A549 (cell line): ENCODE measurements at regions of chr2 and their contacts with region 1.

Region 1: DNA sequence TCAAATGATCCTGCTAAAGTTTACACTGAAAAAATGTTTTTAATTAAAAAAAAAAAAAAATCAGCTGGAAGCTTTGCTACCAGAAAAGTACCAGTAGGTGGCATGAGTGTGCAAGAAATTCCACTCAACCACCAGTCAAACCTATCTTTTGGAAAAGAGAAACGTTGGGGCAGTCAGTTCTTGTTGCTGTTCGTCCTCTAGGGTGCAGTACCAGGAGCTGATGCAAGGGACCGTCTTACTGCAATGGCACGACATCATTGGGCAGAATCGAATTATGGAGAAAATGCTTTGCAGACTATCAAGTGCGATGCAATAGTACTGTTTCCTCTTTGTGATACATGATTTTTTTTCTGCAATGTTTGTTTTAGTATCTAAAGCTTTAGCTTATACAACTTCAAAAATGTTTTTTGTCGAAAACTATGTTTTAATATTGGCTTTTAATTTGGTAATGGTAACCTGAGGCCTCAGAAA is 18.3 kb downstream of the YPEL5 start:
- DNase-seq: peak; percentile 96
- ATAC-seq: peak; percentile 95 to 99
- H3K4me3 ChIP-seq: no peak overlapping the region
- H3K27ac ChIP-seq: no peak overlapping the region
- H3K4me1 ChIP-seq: no peaks in the 10 kb centered on the region
- CTCF ChIP-seq: peak; percentile 100
- EP300 ChIP-seq: no peak
- POLR2A ChIP-seq: no peak
- RAD21 ChIP-seq: peak; percentile 97 to 98

Region 2: GRCh38 chr2:30078521-30078920 is 86.6 kb before region 1 on chr2:
- CTCF ChIA-PET with region 1: no interaction called
- POLR2A ChIA-PET with region 1: no interaction called
- DNase-seq: no peak
- ATAC-seq: 0 out of 6 replicates have a peak, but pooled peaks of 1 of the 2 experiments have one; percentile 34
- H3K4me3 ChIP-seq: no peak overlapping the region
- H3K27ac ChIP-seq: no peak overlapping the region
- H3K4me1 ChIP-seq: no peaks in the 10 kb centered on the region
- CTCF ChIP-seq: no peak
- EP300 ChIP-seq: no peak
- POLR2A ChIP-seq: no peak
- RAD21 ChIP-seq: no peak

Region 3: GRCh38 chr2:30146438-30147147 is 18.5 kb before region 1 on chr2 and contains the start of gene YPEL5:
- CTCF ChIA-PET with region 1: interaction called, 149 read pairs
- POLR2A ChIA-PET with region 1: interaction called, 9 read pairs
- DNase-seq: peak; percentile 98 to 99
- ATAC-seq: peak; percentile 92 to 99
- H3K4me3 ChIP-seq: peak within 1 kb of the TSS; percentile 99
- H3K27ac ChIP-seq: peak within 1 kb of the TSS; percentile 95
- H3K4me1 ChIP-seq: peaks cover 36% of the 10 kb centered on the region
- CTCF ChIP-seq: no peak
- EP300 ChIP-seq: 0 out of 5 replicates have a peak, but pooled peaks of 1 of the 2 experiments have one; percentile 25
- POLR2A ChIP-seq: no peak; the same call in 1 of the 2 replicates
- RAD21 ChIP-seq: no peak
- polyA plus RNA-seq, gene YPEL5: 89.6 and 93.4 TPM in 2 replicates

Region 4: DNA sequence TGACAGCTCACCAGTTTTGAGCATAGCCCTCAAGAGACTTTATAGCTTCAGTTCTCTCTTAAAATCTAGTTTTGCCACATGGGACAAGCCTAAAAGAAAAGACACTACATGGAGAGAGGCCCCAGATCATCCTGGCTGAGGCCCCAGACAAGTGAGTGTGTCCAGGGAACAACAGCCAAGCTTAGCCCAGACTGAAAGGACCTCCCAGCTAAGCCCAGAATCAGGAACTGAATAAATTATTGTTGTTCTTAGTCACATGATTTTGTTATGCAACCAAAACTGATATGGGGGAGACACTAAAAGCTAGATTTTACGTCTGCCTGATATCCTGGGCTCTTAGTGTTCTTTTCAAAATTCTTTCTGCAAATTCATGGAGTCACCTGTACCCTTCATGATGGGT is 36.9 kb after region 1 on chr2:
- CTCF ChIA-PET with region 1: interaction called, 149 read pairs
- POLR2A ChIA-PET with region 1: no interaction called
- DNase-seq: no peak
- ATAC-seq: no peak
- H3K4me3 ChIP-seq: no peak overlapping the region
- H3K27ac ChIP-seq: no peak overlapping the region
- H3K4me1 ChIP-seq: no peaks in the 10 kb centered on the region
- CTCF ChIP-seq: no peak
- EP300 ChIP-seq: no peak
- POLR2A ChIP-seq: no peak
- RAD21 ChIP-seq: no peak

Region 5: GRCh38 chr2:30231212-30231995 is 66.3 kb after region 1 on chr2 and contains the start of gene LBH:
- CTCF ChIA-PET with region 1: interaction called, 21 read pairs
- POLR2A ChIA-PET with region 1: interaction called, 9 read pairs
- DNase-seq: peak; percentile 87 to 88
- ATAC-seq: peak; percentile 59 to 68
- H3K4me3 ChIP-seq: peak within 1 kb of the TSS; percentile 97
- H3K27ac ChIP-seq: peak within 1 kb of the TSS; percentile 92 to 94
- H3K4me1 ChIP-seq: peaks cover 33% of the 10 kb centered on the region
- CTCF ChIP-seq: 0 out of 3 replicates have a peak, but pooled peaks have one; percentile 11
- EP300 ChIP-seq: no peak
- POLR2A ChIP-seq: peak; percentile 100
- RAD21 ChIP-seq: 0 out of 5 replicates have a peak, but pooled peaks of 1 of the 2 experiments have one; percentile 21
- polyA plus RNA-seq, gene LBH: 149 and 163 TPM in 2 replicates

Region 6: GRCh38 chr2:30686000-30686399 is 520.9 kb after region 1 on chr2:
- CTCF ChIA-PET with region 1: interaction called, 13 read pairs
- POLR2A ChIA-PET with region 1: no interaction called
- DNase-seq: peak in 1 of 2 experiments; percentile 55
- ATAC-seq: peak; percentile 58 to 80; a peak in 4 of 6 replicates
- H3K4me3 ChIP-seq: no peak overlapping the region
- H3K27ac ChIP-seq: no peak overlapping the region
- H3K4me1 ChIP-seq: no peaks in the 10 kb centered on the region
- CTCF ChIP-seq: 0 out of 3 replicates have a peak, but pooled peaks have one; percentile 12
- EP300 ChIP-seq: no peak
- POLR2A ChIP-seq: no peak
- RAD21 ChIP-seq: peak in 1 of 2 experiments; percentile 3; a peak in 1 of 5 replicates

Region 7: DNA sequence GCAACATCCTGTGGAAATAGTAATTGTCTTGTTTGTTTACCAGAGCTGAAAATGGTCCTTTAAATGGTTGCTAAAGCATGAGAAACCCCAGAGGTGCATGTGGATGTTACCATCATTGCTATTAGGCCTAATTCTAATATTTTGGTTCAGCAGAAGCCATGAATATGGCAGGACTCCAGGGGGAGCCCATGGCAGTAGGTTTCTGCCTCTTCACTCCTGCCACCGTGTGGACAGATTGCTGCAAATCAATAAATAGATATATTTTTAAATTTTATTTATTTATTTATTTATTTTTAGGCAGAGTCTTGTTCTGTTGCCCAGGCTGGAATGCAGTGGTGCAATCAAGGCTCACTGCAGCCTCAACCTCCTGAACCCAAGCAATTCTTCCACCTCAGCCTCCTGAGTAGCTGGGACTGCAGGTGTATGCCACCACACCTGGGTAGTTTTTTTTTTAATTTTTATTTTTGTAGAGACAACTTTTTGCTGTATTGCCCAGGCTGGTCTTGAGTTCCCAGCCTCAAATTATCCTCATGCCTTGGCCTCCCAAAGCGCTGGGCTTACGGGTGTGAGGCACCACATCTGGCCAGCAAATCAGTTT is 697.1 kb after region 1 on chr2:
- CTCF ChIA-PET with region 1: interaction called, 11 read pairs
- POLR2A ChIA-PET with region 1: no interaction called
- DNase-seq: peak; percentile 59 to 87
- ATAC-seq: peak; percentile 68 to 87; a peak in 5 of 6 replicates
- H3K4me3 ChIP-seq: no peak overlapping the region
- H3K27ac ChIP-seq: no peak overlapping the region
- H3K4me1 ChIP-seq: no peaks in the 10 kb centered on the region
- CTCF ChIP-seq: peak; percentile 96
- EP300 ChIP-seq: no peak
- POLR2A ChIP-seq: no peak
- RAD21 ChIP-seq: peak; percentile 73 to 80